Activated CD8-positive, alpha-beta T cell treated with anti-CD3 and anti-CD28 coated beads for 36 hours (primary cell): ENCODE measurements at regions of chr11 and their contacts with region 1.

Region 1: GRCh38 chr11:63212742-63213141 is 30.7 kb downstream of the SLC22A25 start:
- DNase-seq: peak; percentile 14
- ATAC-seq: no peak
- H3K4me3 Mint-ChIP-seq: no peak overlapping the region
- H3K27ac Mint-ChIP-seq: no peak overlapping the region
- H3K4me1 Mint-ChIP-seq: no peaks in the 10 kb centered on the region
- H3K27me3 Mint-ChIP-seq: peaks cover 16% of the 10 kb centered on the region
- CTCF ChIP-seq: peak; percentile 66

Region 2: GRCh38 chr11:63032457-63032856 is 180.3 kb before region 1 on chr11:
- CTCF ChIA-PET with region 1: interaction called, 12 read pairs
- POLR2A ChIA-PET with region 1: no interaction called
- intact Hi-C with region 1: loop called (anchors 5 kb)
- DNase-seq: no peak
- ATAC-seq: no peak
- H3K4me3 Mint-ChIP-seq: no peak overlapping the region
- H3K27ac Mint-ChIP-seq: no peak overlapping the region
- H3K4me1 Mint-ChIP-seq: no peaks in the 10 kb centered on the region
- H3K27me3 Mint-ChIP-seq: peaks cover 12% of the 10 kb centered on the region
- CTCF ChIP-seq: no peak